Endothelial cell of umbilical vein (primary cell): ENCODE measurements at regions of chr3 and their contacts with region 1.

Region 1: GRCh38 chr3:25007974-25008658 is 419.9 kb upstream of the RARB start:
- DNase-seq: peak; percentile 4
- H3K4me3 ChIP-seq: no peak overlapping the region
- H3K27ac ChIP-seq: no peak overlapping the region
- H3K4me1 ChIP-seq: no peaks in the 10 kb centered on the region
- H3K27me3 ChIP-seq: no peaks in the 10 kb centered on the region
- CTCF ChIP-seq: no peak
- POLR2A ChIP-seq: no peak

Region 2: GRCh38 chr3:23619705-23620637 is 1388.1 kb before region 1 on chr3:
- CTCF ChIA-PET with region 1: no interaction called
- POLR2A ChIA-PET with region 1: no interaction called
- dilution Hi-C with region 1: no loop called
- intact Hi-C with region 1: no loop called
- DNase-seq: no peak
- H3K4me3 ChIP-seq: no peak overlapping the region
- H3K27ac ChIP-seq: no peak overlapping the region
- H3K4me1 ChIP-seq: peaks cover 4% of the 10 kb centered on the region
- H3K27me3 ChIP-seq: no peaks in the 10 kb centered on the region
- CTCF ChIP-seq: no peak
- POLR2A ChIP-seq: no peak

Region 3: GRCh38 chr3:24680214-24680967 is 327.7 kb before region 1 on chr3:
- CTCF ChIA-PET with region 1: no interaction called
- POLR2A ChIA-PET with region 1: no interaction called
- dilution Hi-C with region 1: no loop called
- intact Hi-C with region 1: no loop called
- DNase-seq: peak; percentile 57
- H3K4me3 ChIP-seq: no peak overlapping the region
- H3K27ac ChIP-seq: no peak overlapping the region
- H3K4me1 ChIP-seq: no peaks in the 10 kb centered on the region
- H3K27me3 ChIP-seq: peaks cover 0 to 2% of the 10 kb centered on the region in 2 experiments
- CTCF ChIP-seq: peak; percentile 88 to 92
- POLR2A ChIP-seq: no peak

Region 4: GRCh38 chr3:24923570-24923969 is 84.5 kb before region 1 on chr3:
- CTCF ChIA-PET with region 1: no interaction called
- POLR2A ChIA-PET with region 1: no interaction called
- dilution Hi-C with region 1: no loop called
- intact Hi-C with region 1: no loop called
- DNase-seq: no peak
- H3K4me3 ChIP-seq: no peak overlapping the region
- H3K27ac ChIP-seq: no peak overlapping the region
- H3K4me1 ChIP-seq: no peaks in the 10 kb centered on the region
- H3K27me3 ChIP-seq: no peaks in the 10 kb centered on the region
- CTCF ChIP-seq: no peak
- POLR2A ChIP-seq: no peak

Region 5: DNA sequence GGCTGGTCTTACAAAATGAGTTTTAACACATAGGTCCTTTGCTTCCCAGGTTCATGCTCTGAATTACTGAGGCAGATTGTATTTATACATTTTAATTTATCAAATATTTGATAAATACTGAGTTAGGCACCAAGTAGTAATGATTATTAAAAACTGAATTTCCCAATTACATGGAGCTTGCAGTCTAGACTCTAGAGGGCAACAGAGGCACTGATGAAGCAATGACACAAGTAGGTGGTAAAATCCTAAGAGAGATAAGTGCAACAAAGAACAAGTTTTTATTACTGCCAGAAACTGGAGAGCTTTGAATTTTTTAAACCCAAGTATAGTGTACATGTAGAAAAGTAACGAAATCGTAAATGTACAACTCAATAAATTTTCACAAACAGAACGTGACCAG is 13.7 kb after region 1 on chr3:
- CTCF ChIA-PET with region 1: interaction called, 20 read pairs
- POLR2A ChIA-PET with region 1: no interaction called
- dilution Hi-C with region 1: no loop called
- intact Hi-C with region 1: no loop called
- DNase-seq: peak; percentile 42
- H3K4me3 ChIP-seq: no peak overlapping the region
- H3K27ac ChIP-seq: no peak overlapping the region
- H3K4me1 ChIP-seq: no peaks in the 10 kb centered on the region
- H3K27me3 ChIP-seq: no peaks in the 10 kb centered on the region
- CTCF ChIP-seq: peak; percentile 18 to 45
- POLR2A ChIP-seq: no peak